CD8-positive, alpha-beta T cell (primary cell): ENCODE measurements at regions of chr6 and their contacts with region 1.

Region 1: DNA sequence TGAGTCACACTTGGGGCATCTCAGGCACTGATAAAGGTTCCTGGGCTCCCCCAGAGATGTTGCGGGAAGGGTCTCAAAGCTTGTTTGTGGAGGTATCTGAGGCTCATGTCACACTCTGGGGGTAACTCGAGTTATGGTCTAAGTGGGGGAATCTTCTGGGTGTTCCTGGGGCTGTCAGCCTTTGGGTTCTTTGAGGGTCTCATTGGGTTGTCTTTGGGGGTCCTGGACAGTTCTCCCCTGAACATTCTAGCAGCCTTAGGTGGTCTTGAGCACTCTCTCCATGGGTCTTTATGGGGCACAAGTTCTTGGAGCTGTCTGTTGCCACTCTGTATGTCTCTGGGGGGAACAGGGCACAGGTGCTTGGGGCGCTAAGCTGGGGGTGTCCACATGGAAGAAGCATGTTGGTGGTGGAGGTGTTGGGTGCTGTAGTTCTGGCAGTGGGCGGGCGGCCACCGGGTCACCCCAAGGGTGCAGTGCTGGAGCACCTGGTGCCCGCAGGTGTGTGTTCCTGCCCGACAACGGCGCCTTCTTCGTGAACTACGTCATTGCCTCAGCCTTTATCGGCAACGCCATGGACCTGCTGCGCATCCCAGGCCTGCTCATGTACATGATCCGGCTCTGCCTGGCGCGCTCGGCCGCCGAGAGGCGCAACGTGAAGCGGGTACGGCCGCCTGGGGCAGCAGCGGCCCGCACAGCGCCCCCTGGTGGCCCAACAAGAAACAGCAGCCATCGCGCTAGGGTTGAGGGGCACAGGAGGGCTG is 7.1 kb upstream of the CAPN11 start:
- DNase-seq: peak; percentile 63 to 88 (median 80)
- ATAC-seq: peak; percentile 93
- H3K4me3 ChIP-seq: peak overlapping the region in 1 of 2 experiments; percentile 20
- H3K4me3 Mint-ChIP-seq: no peak overlapping the region
- H3K27ac ChIP-seq: no peak overlapping the region
- H3K27ac Mint-ChIP-seq: no peak overlapping the region
- H3K4me1 ChIP-seq: peaks cover 8% of the 10 kb centered on the region
- H3K4me1 Mint-ChIP-seq: peaks cover 2% of the 10 kb centered on the region
- H3K27me3 ChIP-seq: no peaks in the 10 kb centered on the region
- H3K27me3 Mint-ChIP-seq: no peaks in the 10 kb centered on the region
- CTCF ChIP-seq: peak; percentile 99

Region 2: GRCh38 chr6:43924222-43924702 is 227.3 kb before region 1 on chr6:
- CTCF ChIA-PET with region 1: no interaction called
- POLR2A ChIA-PET with region 1: no interaction called
- intact Hi-C with region 1: loop called in 1 of 2 experiments (anchors 5 kb)
- DNase-seq: peak; percentile 25 to 74 (median 57)
- ATAC-seq: peak; percentile 75
- H3K4me3 ChIP-seq: no peak overlapping the region
- H3K4me3 Mint-ChIP-seq: peak overlapping the region; percentile 47
- H3K27ac ChIP-seq: no peak overlapping the region
- H3K27ac Mint-ChIP-seq: no peak overlapping the region
- H3K4me1 ChIP-seq: peaks cover 25% of the 10 kb centered on the region
- H3K4me1 Mint-ChIP-seq: peaks cover 39% of the 10 kb centered on the region
- H3K27me3 ChIP-seq: no peaks in the 10 kb centered on the region
- H3K27me3 Mint-ChIP-seq: no peaks in the 10 kb centered on the region
- CTCF ChIP-seq: no peak

Region 3: DNA sequence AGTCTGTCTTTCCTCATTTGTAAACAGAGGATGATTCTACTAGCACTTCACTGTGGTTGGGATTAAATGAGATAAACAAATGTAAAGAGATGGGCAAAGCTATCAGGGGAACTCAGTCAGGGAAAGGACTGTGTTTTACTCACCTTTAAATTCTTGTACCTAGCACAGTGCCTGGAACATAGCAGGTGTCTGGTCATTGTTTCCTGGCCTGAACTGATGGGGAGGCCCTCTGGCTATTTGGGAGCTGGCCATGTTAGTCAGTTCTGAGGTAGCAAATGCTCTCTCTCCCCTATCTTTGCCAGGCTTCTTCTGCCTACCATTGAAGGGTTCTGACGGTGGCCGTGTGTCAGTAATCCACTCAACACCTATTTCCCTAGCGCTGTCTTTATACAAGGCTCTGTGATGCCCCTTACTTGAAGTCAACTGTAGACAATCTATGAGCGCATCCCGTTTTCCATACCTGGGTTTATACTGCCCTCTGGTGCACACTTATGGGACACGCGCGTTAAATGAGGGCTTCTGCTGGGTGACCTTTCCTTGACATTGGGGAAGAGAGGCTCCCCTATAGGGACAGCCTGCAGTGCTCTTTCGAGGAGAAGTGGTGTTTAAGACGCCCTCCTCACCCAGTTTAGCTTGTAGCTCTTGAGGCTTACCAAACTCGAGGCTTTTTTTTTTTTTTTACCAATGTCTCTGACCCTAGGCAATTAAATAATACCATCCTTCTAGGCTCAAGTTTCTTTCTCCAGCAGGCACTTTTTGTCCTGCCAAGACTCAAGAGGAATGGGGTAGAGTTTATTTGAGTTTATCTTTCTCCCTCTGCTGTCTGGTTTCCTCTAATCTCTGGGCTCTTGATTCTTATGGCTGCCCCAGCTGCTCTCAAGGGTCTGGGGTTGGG is 186.9 kb after region 1 on chr6:
- CTCF ChIA-PET with region 1: interaction called, 3 read pairs
- POLR2A ChIA-PET with region 1: no interaction called
- intact Hi-C with region 1: loop called in 1 of 2 experiments (anchors 5 kb)
- DNase-seq: peak; percentile 33 to 78 (median 63)
- ATAC-seq: peak; percentile 94
- H3K4me3 ChIP-seq: no peak overlapping the region
- H3K4me3 Mint-ChIP-seq: no peak overlapping the region
- H3K27ac ChIP-seq: no peak overlapping the region
- H3K27ac Mint-ChIP-seq: no peak overlapping the region
- H3K4me1 ChIP-seq: no peaks in the 10 kb centered on the region
- H3K4me1 Mint-ChIP-seq: no peaks in the 10 kb centered on the region
- H3K27me3 ChIP-seq: peaks cover 0 to 3% of the 10 kb centered on the region in 2 experiments
- H3K27me3 Mint-ChIP-seq: peaks cover 18% of the 10 kb centered on the region
- CTCF ChIP-seq: peak; percentile 78